ENCODE measurements at regions of chr4 and their contacts with region 1.

Region 1: GRCh38 chr4:37603070-37603468 is 83.1 kb downstream of the RELL1 start:
- ATAC-seq: peak; percentile 75 to 97 (median 90)
- H3K4me3 ChIP-seq: no peak overlapping the region
- H3K27ac ChIP-seq: no peak overlapping the region
- H3K4me1 ChIP-seq: no peaks in the 10 kb centered on the region

Region 2: DNA sequence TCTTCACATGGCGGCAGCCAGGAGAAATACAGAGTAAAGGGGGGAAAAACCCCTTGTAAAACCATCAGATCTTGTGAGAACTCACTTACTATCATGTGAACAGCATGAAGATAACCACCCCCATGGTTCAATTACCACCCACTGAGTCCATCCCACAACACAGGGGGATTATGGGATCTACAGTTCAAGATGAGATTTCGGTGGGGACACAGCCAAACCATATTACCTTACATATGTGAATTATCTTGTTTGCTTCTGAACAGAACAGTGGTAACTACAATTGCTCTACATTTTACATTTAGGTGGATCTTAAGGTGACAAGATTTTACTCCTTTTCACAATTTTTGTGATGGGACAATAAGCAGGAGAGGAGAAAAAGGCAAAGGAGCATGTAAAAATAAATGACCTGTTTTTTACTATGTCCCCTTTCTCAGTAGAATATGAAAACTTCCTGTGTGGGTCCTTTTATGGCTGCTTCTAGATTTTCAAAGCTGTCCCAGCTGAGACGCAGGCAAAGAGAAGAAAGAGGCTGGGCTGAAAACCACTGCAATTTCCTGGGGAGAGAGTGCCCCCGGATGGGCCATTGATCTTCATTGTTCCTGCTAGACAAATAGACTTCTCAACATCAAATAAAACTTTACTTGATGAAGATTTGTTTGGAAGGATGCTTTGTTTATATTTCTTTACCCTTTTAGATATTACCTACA is 177.5 kb after region 1 on chr4:
- in situ Hi-C with region 1: loop called in 3 of 9 experiments (anchors 10 to 25 kb)
- ATAC-seq: no peak
- H3K4me3 ChIP-seq: no peak overlapping the region
- H3K27ac ChIP-seq: no peak overlapping the region
- H3K4me1 ChIP-seq: no peaks in the 10 kb centered on the region

Region 3: GRCh38 chr4:37793562-37793961 is 190.5 kb after region 1 on chr4:
- in situ Hi-C with region 1: loop called in 3 of 9 experiments (anchors 10 to 25 kb)
- ATAC-seq: peak in 3 of 8 experiments; percentile 30 to 71 (median 61)
- H3K4me3 ChIP-seq: no peak overlapping the region
- H3K27ac ChIP-seq: no peak overlapping the region
- H3K4me1 ChIP-seq: peaks cover 3 to 8% of the 10 kb centered on the region in 2 donors

Region 4: DNA sequence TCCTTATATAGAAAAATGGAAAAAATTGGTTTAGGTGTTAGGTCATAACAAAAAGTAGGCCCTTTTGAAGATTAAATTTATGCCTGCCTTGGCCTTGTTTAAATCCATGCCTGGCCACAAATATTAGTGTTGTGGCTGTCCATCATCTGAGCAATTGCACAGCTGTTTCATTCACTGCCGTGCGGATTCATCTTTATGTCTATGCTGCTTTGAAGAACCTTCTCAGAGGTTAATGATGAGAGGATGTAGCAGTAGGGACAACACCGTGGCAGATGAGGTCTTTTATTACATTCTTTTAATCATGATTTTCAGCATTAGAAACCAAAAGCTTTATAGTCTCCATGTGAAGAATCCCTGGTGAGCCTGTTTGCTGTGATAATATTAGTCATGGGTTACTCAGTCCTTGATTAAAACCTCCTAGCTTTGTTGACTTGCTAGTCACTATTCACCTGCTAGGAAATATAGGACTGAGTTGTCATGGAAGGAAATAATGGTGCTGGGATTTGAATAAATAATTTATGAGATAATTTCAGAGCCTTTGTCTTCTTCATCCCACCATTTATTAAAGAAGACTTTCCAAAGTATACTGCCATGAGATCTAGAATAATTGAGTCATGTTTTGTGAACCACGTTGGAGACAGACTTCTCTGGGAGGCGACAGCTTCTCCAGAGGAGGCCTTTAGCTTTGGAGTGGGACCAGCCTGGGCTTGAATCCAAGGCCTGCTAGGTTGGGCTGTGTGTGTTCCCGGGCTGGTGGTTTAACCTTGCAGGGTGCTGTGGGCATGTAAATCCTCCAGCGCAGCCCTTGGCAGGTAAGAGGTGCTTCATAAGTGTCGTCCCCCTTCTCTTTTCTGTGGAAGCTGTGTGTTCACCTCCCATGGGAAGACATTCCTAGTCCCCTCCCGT is 410.6 kb after region 1 on chr4:
- in situ Hi-C with region 1: loop called in 1 of 9 experiments (anchors 25 kb)
- ATAC-seq: peak in 6 of 8 experiments; percentile 26 to 75 (median 64)
- H3K4me3 ChIP-seq: no peak overlapping the region
- H3K27ac ChIP-seq: peak overlapping the region in 1 of 2 donors; percentile 67
- H3K4me1 ChIP-seq: peaks cover 7 to 19% of the 10 kb centered on the region in 2 donors

Region 5: GRCh38 chr4:38034986-38035882 is 432.2 kb after region 1 on chr4:
- in situ Hi-C with region 1: loop called in 1 of 9 experiments (anchors 25 kb)
- ATAC-seq: peak in 3 of 8 experiments; percentile 43 to 56 (median 54)
- H3K4me3 ChIP-seq: no peak overlapping the region
- H3K27ac ChIP-seq: no peak overlapping the region
- H3K4me1 ChIP-seq: no peaks in the 10 kb centered on the region

Measured in motor neuron (in vitro differentiated cells).